ENCODE measurements at regions of chr6 and their contacts with region 1.

Region 1: DNA sequence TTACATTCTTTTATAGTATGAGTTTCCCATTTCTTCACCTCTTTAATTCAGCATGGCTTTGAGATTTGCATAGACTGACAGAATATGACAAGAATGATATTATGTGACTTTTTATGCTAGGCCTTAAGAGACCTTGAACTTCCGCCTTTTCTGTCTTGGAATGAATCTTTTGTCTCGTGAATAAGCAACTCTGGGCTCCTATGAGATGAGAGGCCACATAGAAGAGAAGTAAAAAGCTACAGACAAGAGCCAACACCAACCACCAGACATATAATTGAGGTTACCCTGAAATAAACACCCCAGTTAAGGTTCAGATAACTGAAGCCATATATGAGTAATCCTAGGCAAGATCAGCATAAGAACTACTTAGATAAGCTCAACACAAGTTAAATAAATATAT is 600.8 kb downstream of the MEI4 start:
- DNase-seq: no peak
- H3K4me3 ChIP-seq: no peak overlapping the region
- H3K27ac ChIP-seq: no peak overlapping the region
- H3K4me1 ChIP-seq: no peaks in the 10 kb centered on the region
- H3K27me3 ChIP-seq: no peaks in the 10 kb centered on the region
- CTCF ChIP-seq: no peak

Region 2: GRCh38 chr6:78324213-78324612 is 70.6 kb after region 1 on chr6:
- intact Hi-C with region 1: loop called (anchors 2 kb)
- DNase-seq: no peak
- H3K4me3 ChIP-seq: no peak overlapping the region
- H3K27ac ChIP-seq: no peak overlapping the region
- H3K4me1 ChIP-seq: no peaks in the 10 kb centered on the region
- H3K27me3 ChIP-seq: no peaks in the 10 kb centered on the region
- CTCF ChIP-seq: no peak

Measured in left ventricle myocardium inferior (tissue), 1 donor.